Activated B cell treated with CpG ODN at 0.5 μM for 24 hours (primary cell): ENCODE measurements at regions of chr10 and their contacts with region 1.

Region 1: GRCh38 chr10:33008499-33009243 is 50.6 kb upstream of the ITGB1 start:
- DNase-seq: no peak
- ATAC-seq: peak; percentile 33
- H3K4me3 Mint-ChIP-seq: peak overlapping the region; percentile 67
- H3K27ac Mint-ChIP-seq: no peak overlapping the region
- H3K4me1 Mint-ChIP-seq: peaks cover 41% of the 10 kb centered on the region
- H3K27me3 Mint-ChIP-seq: peaks cover 6% of the 10 kb centered on the region
- CTCF ChIP-seq: peak; percentile 85

Region 2: GRCh38 chr10:32190890-32191491 is 817.7 kb before region 1 on chr10:
- CTCF ChIA-PET with region 1: interaction called, 3 read pairs
- POLR2A ChIA-PET with region 1: no interaction called
- intact Hi-C with region 1: loop called (anchors 1 kb)
- DNase-seq: no peak
- ATAC-seq: peak; percentile 75
- H3K4me3 Mint-ChIP-seq: no peak overlapping the region
- H3K27ac Mint-ChIP-seq: peak overlapping the region; percentile 75
- H3K4me1 Mint-ChIP-seq: peaks cover 4% of the 10 kb centered on the region
- H3K27me3 Mint-ChIP-seq: peaks cover 6% of the 10 kb centered on the region
- CTCF ChIP-seq: no peak

Region 3: GRCh38 chr10:32279795-32280194 is 728.9 kb before region 1 on chr10:
- CTCF ChIA-PET with region 1: no interaction called
- POLR2A ChIA-PET with region 1: no interaction called
- intact Hi-C with region 1: no loop called
- DNase-seq: no peak
- ATAC-seq: no peak
- H3K4me3 Mint-ChIP-seq: no peak overlapping the region
- H3K27ac Mint-ChIP-seq: no peak overlapping the region
- H3K4me1 Mint-ChIP-seq: peaks cover under 1% of the 10 kb centered on the region
- H3K27me3 Mint-ChIP-seq: no peaks in the 10 kb centered on the region
- CTCF ChIP-seq: no peak

Region 4: GRCh38 chr10:32308027-32308603 is 700.6 kb before region 1 on chr10:
- CTCF ChIA-PET with region 1: no interaction called
- POLR2A ChIA-PET with region 1: no interaction called
- intact Hi-C with region 1: no loop called
- DNase-seq: no peak
- ATAC-seq: no peak
- H3K4me3 Mint-ChIP-seq: no peak overlapping the region
- H3K27ac Mint-ChIP-seq: no peak overlapping the region
- H3K4me1 Mint-ChIP-seq: peaks cover 54% of the 10 kb centered on the region
- H3K27me3 Mint-ChIP-seq: no peaks in the 10 kb centered on the region
- CTCF ChIP-seq: no peak

Region 5: GRCh38 chr10:32445740-32446535 is 562.7 kb before region 1 on chr10 and contains the start of gene CCDC7:
- CTCF ChIA-PET with region 1: interaction called, 3 read pairs
- POLR2A ChIA-PET with region 1: interaction called, 3 read pairs
- intact Hi-C with region 1: loop called (anchors 2 kb)
- DNase-seq: peak; percentile 83
- ATAC-seq: peak; percentile 98
- H3K4me3 Mint-ChIP-seq: peak within 1 kb of the TSS; percentile 98
- H3K27ac Mint-ChIP-seq: peak within 1 kb of the TSS; percentile 99
- H3K4me1 Mint-ChIP-seq: peaks cover 15% of the 10 kb centered on the region
- H3K27me3 Mint-ChIP-seq: peaks cover 6% of the 10 kb centered on the region
- CTCF ChIP-seq: no peak
- total RNA-seq, gene CCDC7: 16.8 and 20.0 TPM in 2 replicates

Region 6: DNA sequence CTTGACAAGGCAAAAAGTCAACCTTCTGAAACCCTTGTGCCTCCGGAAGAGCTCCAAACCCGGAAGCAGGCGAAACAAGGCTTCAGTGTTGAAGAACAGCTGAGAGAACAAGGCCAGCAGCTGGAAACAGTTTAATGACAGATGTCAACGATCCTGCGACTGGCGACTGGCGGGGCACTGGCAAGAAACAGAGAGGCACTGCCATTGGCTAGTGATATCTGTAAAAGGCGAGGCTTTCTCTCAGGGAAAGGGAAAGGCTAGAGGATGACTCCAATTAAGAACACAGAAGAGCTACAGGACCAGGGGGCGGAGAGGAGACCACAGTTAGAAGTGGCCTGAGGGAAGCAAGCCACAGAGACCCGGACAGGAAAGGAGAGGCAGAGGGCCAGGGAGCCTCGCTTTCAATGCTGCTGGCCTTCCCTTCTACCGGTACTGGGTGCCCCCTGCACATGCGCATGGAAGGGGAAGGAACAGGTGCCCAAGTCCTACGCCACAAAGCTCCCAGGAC is 70.1 kb before region 1 on chr10:
- CTCF ChIA-PET with region 1: interaction called, 7 read pairs
- POLR2A ChIA-PET with region 1: no interaction called
- intact Hi-C with region 1: loop called (anchors 2 kb)
- DNase-seq: no peak
- ATAC-seq: no peak
- H3K4me3 Mint-ChIP-seq: peak overlapping the region; percentile 26
- H3K27ac Mint-ChIP-seq: peak overlapping the region; percentile 65
- H3K4me1 Mint-ChIP-seq: peaks cover 58% of the 10 kb centered on the region
- H3K27me3 Mint-ChIP-seq: no peaks in the 10 kb centered on the region
- CTCF ChIP-seq: no peak

Region 7: DNA sequence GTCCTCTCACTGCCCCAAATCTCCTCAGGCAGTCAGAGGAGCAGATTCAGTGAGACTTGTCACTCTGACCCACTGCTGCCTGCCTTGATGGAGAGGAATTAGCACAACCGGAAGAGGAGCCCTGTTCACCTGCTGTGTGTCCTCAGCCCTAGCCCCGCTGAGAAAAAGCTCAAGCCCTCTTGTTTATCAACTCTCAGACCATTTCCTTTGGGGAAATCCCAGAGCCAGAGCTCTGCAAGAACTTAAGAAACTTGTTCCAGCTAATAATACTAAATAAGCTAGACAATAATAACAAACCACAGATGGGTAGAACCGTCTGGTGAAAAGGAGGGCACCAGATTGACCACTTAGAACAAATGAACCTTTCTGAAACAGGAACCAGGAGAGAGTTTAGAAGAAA is 12.9 kb before region 1 on chr10:
- CTCF ChIA-PET with region 1: interaction called, 14 read pairs
- POLR2A ChIA-PET with region 1: no interaction called
- intact Hi-C with region 1: no loop called
- DNase-seq: no peak
- ATAC-seq: peak; percentile 79
- H3K4me3 Mint-ChIP-seq: peak overlapping the region; percentile 19
- H3K27ac Mint-ChIP-seq: peak overlapping the region; percentile 57
- H3K4me1 Mint-ChIP-seq: peaks cover 32% of the 10 kb centered on the region
- H3K27me3 Mint-ChIP-seq: no peaks in the 10 kb centered on the region
- CTCF ChIP-seq: no peak

Region 8: DNA sequence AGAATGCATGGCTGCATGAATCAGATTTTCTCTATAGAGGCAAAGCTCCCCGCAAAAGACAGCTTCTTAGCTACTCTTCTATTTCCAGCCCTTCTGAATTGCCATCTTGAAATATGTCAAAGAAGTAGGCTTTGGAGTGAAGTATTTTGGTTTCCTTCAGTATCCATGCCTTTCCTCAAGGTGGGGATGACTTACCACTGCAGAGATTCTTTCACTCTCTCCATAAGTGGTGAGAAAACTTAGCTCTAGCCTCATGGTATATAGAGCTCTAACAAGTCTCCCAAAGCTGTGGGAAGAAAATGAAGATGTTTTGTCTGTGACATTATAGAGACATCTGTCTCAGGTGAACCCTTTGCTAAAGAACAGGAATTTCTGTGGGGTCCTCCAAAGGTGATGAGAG is 39.0 kb after region 1 on chr10:
- CTCF ChIA-PET with region 1: no interaction called
- POLR2A ChIA-PET with region 1: no interaction called
- intact Hi-C with region 1: no loop called
- DNase-seq: no peak
- ATAC-seq: no peak
- H3K4me3 Mint-ChIP-seq: no peak overlapping the region
- H3K27ac Mint-ChIP-seq: no peak overlapping the region
- H3K4me1 Mint-ChIP-seq: no peaks in the 10 kb centered on the region
- H3K27me3 Mint-ChIP-seq: no peaks in the 10 kb centered on the region
- CTCF ChIP-seq: no peak